ENCODE measurements at regions of chr5 and their contacts with region 1.

Region 1: GRCh38 chr5:151825445-151825844 is 53.7 kb downstream of the G3BP1 start:
- DNase-seq: no peak
- H3K4me3 ChIP-seq: no peak overlapping the region
- H3K27ac ChIP-seq: no peak overlapping the region
- H3K4me1 ChIP-seq: no peaks in the 10 kb centered on the region
- H3K27me3 ChIP-seq: no peaks in the 10 kb centered on the region
- CTCF ChIP-seq: peak; percentile 62 to 79 (median 73)
- POLR2A ChIP-seq: no peak

Region 2: DNA sequence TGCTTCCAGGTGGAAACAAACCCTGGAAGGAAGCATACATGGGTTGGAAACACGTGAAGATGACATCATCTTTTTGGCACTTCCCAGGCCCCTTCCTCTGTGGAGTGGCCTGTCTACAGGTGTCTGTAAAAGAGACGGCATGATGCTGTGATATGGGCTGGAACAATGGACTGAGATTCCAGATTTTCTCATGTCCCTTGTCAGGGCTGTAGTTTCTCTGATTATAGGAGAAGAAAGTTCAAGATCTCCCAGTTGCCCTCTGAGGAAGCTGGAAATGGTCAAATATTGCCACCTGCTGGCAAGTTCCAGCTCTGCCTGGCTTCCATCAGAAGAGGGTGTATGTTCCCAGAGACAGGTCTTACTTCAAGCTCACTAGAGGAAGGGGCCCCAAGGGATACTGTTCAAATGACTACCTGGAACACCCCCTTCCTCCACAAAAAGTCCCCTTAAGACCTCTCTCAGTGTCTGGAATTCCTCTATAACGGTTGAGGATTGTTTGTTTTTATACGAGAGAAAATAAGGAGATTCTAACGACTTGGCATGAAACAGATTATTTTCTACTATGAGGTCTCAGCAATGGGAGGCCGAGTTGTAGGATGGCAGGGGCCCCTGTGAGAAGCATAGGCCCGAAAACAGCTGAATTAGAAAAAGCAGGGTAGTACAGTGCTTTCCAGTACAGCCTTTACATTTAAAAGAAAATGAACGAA is 660.6 kb before region 1 on chr5:
- intact Hi-C with region 1: no loop called
- DNase-seq: peak; percentile 85
- H3K4me3 ChIP-seq: no peak overlapping the region
- H3K27ac ChIP-seq: peak overlapping the region in 3 of 8 donors; percentile 10 to 37 (median 19)
- H3K4me1 ChIP-seq: peaks cover 8 to 44% (median 19%) of the 10 kb centered on the region in 6 donors
- H3K27me3 ChIP-seq: no peaks in the 10 kb centered on the region
- CTCF ChIP-seq: peak; percentile 91 to 96 (median 95)
- POLR2A ChIP-seq: no peak

Region 3: DNA sequence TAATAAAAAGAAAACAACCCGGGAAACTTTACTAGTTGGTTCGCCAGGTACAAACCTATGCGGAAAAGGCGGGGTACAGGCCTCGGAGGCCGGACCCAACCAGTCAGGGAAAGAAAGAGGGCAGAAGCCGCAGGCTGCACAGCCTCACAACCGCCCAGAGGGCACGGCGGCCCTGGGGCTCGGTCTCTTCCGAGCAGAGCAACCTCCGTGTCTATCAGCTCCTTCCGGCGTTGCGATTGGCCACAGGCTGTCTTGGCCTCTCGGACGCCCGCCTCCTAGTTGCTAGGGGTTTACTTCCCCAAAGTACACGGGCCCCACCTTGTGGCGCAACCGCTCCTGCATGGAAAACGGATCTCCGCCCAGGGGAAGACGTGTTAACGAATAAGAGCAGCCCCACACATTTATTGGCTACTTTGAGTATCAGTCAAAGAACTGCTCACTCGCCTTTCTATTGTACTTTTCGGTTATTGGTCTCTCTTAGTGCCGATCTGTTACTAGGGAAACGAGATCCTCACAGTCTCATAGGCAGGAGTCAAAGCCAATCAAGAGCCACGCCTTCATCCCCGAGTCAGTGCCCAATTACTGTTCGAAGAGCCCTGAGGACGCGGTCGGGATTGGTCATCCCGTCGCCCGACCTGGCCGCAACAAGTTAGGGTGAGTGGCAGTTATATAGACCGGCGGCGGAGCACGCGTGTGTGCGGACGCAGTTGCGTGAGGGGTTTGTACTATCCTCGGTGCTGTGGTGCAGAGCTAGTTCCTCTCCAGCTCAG is 54.0 kb before region 1 on chr5 and contains the start of gene G3BP1:
- intact Hi-C with region 1: no loop called
- DNase-seq: peak; percentile 100
- H3K4me3 ChIP-seq: peak within 1 kb of the TSS; percentile 78 to 94 (median 84)
- H3K27ac ChIP-seq: peak within 1 kb of the TSS; percentile 93 to 99 (median 96)
- H3K4me1 ChIP-seq: peaks cover 22 to 56% (median 50%) of the 10 kb centered on the region in 6 donors
- H3K27me3 ChIP-seq: no peaks in the 10 kb centered on the region
- CTCF ChIP-seq: peak; percentile 62 to 94 (median 86)
- POLR2A ChIP-seq: peak; percentile 95 to 99 (median 97)
- total RNA-seq, gene G3BP1: 145 to 167 (median 159) TPM

Region 4: GRCh38 chr5:152142840-152143469 is 317.5 kb after region 1 on chr5:
- intact Hi-C with region 1: loop called (anchors 2 kb)
- DNase-seq: peak; percentile 79
- H3K4me3 ChIP-seq: no peak overlapping the region
- H3K27ac ChIP-seq: no peak overlapping the region
- H3K4me1 ChIP-seq: no peaks in the 10 kb centered on the region
- H3K27me3 ChIP-seq: peaks cover 0 to 4% (median 0%) of the 10 kb centered on the region in 7 donors
- CTCF ChIP-seq: peak; percentile 23 to 86 (median 70)
- POLR2A ChIP-seq: no peak

Region 5: GRCh38 chr5:152505442-152506042 is 680.1 kb after region 1 on chr5:
- intact Hi-C with region 1: loop called (anchors 10 kb)
- DNase-seq: no peak
- H3K4me3 ChIP-seq: no peak overlapping the region
- H3K27ac ChIP-seq: no peak overlapping the region
- H3K4me1 ChIP-seq: no peaks in the 10 kb centered on the region
- H3K27me3 ChIP-seq: no peaks in the 10 kb centered on the region
- CTCF ChIP-seq: peak in 9 of 11 experiments; percentile 25 to 69 (median 54)
- POLR2A ChIP-seq: no peak

Measured in spleen (tissue), 13 donors.